ENCODE measurements at regions of chr4 and their contacts with region 1.

Region 1: DNA sequence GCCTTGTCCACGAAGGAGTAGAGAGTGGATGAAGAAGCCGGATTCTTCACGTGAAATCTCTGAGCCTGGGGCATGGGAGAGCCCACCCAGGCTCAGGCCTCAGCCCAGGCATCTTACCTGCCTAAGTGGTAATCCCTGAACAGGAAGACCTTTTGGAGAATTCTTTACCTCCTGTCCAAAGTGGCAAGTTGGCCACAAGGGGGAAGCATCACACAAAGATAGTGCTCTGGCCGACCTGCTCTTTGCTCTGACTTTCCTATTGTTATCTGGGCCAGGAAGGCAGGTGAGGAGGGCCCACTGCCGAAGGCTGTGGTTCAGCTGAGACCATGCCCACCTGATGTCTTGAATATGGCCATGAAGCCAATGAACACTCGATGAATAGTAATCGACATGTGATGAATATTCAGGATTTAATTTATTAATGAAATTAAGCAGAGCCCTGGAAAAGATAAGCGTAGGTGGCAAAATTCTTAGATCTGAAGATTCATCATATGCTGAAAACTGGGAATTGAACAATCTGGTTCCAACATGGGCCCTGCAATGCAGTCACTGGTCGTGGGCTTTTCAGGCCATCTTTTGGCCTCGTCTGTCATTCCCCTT is 93.8 kb downstream of the PDGFRA start:
- DNase-seq: peak; percentile 74
- ATAC-seq: peak; percentile 65
- H3K4me3 Mint-ChIP-seq: no peak overlapping the region
- H3K27ac Mint-ChIP-seq: no peak overlapping the region
- H3K4me1 Mint-ChIP-seq: no peaks in the 10 kb centered on the region
- H3K27me3 Mint-ChIP-seq: peaks cover 3% of the 10 kb centered on the region

Region 2: DNA sequence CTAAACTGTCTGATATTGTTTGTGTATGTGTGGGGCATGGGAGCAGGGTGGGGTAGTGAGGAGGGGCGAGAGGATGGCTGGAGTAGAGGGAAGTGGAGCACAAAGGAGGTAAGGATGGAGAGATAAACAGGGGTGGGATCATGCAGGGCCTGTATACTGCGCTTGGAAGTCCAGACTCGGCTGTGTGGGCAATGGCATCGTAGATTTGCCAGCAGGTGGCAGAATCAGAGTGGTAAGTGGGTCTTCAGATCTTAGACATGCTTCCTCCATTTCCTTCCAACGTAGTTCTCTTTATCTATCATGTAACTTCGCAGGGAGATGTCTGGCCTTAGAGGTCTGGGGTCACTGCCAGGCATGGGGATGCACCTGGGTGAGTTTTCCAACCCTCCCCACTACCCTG is 61.6 kb after region 1 on chr4:
- CTCF ChIA-PET with region 1: no interaction called
- POLR2A ChIA-PET with region 1: no interaction called
- intact Hi-C with region 1: loop called in 1 of 2 experiments (anchors 10 kb)
- DNase-seq: peak; percentile 42
- ATAC-seq: no peak
- H3K4me3 Mint-ChIP-seq: no peak overlapping the region
- H3K27ac Mint-ChIP-seq: no peak overlapping the region
- H3K4me1 Mint-ChIP-seq: no peaks in the 10 kb centered on the region
- H3K27me3 Mint-ChIP-seq: peaks cover 4% of the 10 kb centered on the region

Region 3: DNA sequence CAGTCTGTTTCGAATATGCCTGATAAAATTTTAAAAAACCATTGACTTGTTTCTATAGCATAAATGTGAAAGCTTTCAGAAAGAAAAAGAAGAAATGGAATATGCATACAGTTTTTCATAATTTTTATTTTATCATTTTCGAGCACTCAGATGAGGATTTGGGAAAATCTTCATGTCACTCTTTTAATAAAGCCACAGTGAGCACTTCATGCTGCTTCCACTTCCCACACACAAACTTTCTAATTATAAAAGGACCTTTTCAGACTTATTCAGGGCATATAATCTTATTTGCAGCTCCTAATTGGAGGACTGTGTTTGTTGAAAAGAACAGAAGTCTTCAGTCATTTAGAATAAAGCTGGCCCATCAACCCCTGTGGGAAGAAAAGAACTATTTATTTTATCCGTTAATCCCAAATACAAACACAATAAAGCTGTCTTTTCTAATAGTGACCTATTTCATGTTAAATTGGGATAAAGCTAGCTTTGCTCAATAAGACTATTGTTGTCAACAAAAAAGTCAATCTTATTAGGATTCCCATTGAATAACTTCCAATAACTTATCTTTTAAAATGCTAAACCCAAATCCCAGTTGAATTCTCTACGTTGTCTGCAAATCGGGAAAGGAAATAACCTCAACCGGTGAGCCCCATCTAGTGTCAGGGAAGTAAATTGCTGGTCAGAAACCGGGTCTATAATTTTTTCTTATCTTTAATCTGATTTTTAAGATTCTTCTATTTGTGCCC is 117.6 kb after region 1 on chr4:
- CTCF ChIA-PET with region 1: interaction called, 19 read pairs
- POLR2A ChIA-PET with region 1: no interaction called
- intact Hi-C with region 1: loop called (anchors 1 to 2 kb)
- DNase-seq: no peak
- ATAC-seq: no peak
- H3K4me3 Mint-ChIP-seq: no peak overlapping the region
- H3K27ac Mint-ChIP-seq: no peak overlapping the region
- H3K4me1 Mint-ChIP-seq: no peaks in the 10 kb centered on the region
- H3K27me3 Mint-ChIP-seq: peaks cover 12% of the 10 kb centered on the region

Region 4: GRCh38 chr4:54840992-54841768 is 518.3 kb after region 1 on chr4:
- CTCF ChIA-PET with region 1: no interaction called
- POLR2A ChIA-PET with region 1: no interaction called
- intact Hi-C with region 1: loop called in 1 of 2 experiments (anchors 10 kb)
- DNase-seq: peak; percentile 5
- ATAC-seq: no peak
- H3K4me3 Mint-ChIP-seq: no peak overlapping the region
- H3K27ac Mint-ChIP-seq: no peak overlapping the region
- H3K4me1 Mint-ChIP-seq: peaks cover 2% of the 10 kb centered on the region
- H3K27me3 Mint-ChIP-seq: no peaks in the 10 kb centered on the region

Region 5: DNA sequence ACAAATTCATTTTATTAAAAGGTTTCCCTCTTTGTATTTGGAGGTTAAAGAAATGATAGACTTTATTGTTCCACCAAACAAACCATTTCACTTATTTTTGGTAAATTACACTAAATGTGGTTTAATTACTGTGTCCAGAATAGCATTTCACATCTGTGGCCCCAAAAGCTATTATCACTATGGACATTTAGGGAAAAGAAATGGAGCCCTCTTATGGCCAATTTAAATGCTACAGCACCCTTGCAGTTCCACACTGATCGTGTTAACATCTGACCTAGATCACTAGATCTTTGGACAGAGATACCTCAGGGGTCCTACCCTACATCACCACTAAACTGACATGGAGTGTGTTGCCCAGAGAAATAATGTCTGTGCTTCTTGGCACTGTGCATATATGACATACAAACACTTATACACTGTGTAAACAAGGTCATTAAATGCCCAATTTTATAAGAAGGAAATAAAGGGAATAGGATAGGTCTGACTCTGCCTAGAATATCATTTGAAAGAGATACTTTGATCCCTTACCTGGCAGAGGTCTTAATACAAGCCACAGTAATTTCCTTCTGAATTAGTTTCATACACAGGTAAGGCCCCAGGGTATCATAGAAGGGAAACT is 638.5 kb after region 1 on chr4:
- CTCF ChIA-PET with region 1: interaction called, 5 read pairs
- POLR2A ChIA-PET with region 1: no interaction called
- intact Hi-C with region 1: loop called (anchors 2 to 10 kb)
- DNase-seq: no peak
- ATAC-seq: peak; percentile 44
- H3K4me3 Mint-ChIP-seq: no peak overlapping the region
- H3K27ac Mint-ChIP-seq: no peak overlapping the region
- H3K4me1 Mint-ChIP-seq: peaks cover 14% of the 10 kb centered on the region
- H3K27me3 Mint-ChIP-seq: no peaks in the 10 kb centered on the region

Region 6: GRCh38 chr4:55018521-55018920 is 695.6 kb after region 1 on chr4:
- CTCF ChIA-PET with region 1: no interaction called
- POLR2A ChIA-PET with region 1: no interaction called
- intact Hi-C with region 1: no loop called
- DNase-seq: no peak
- ATAC-seq: no peak
- H3K4me3 Mint-ChIP-seq: no peak overlapping the region
- H3K27ac Mint-ChIP-seq: no peak overlapping the region
- H3K4me1 Mint-ChIP-seq: no peaks in the 10 kb centered on the region
- H3K27me3 Mint-ChIP-seq: peaks cover 10% of the 10 kb centered on the region

Region 7: GRCh38 chr4:55312489-55313101 is 989.7 kb after region 1 on chr4:
- CTCF ChIA-PET with region 1: no interaction called
- POLR2A ChIA-PET with region 1: no interaction called
- intact Hi-C with region 1: loop called in 1 of 2 experiments (anchors 5 kb)
- DNase-seq: peak; percentile 49
- ATAC-seq: peak; percentile 71
- H3K4me3 Mint-ChIP-seq: no peak overlapping the region
- H3K27ac Mint-ChIP-seq: no peak overlapping the region
- H3K4me1 Mint-ChIP-seq: peaks cover 10% of the 10 kb centered on the region
- H3K27me3 Mint-ChIP-seq: no peaks in the 10 kb centered on the region

Region 8: DNA sequence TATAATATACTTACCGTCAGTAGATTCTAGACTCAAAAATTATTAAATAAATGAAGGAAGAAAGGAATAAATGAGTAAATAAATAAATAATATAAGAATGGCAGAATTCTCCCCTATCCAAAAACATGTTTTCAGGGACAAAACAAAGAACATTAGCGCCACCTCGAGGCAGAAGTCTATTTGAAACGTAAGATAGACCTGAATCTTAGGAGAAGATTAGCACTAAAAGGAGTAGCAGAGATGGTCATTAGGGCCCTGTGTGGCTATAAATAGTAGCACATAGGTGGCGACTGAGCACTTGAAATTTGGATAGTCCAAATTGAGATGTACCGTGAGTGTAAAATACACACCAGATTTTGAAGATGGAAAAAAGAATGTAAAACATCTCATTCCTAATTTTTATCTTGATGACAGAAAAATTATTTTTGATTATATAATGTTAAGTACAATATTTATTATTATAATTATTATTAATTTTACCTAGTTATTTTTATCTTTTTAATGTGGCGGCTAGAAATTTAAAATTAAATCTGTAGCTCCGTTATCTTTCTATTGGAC is 998.9 kb after region 1 on chr4:
- CTCF ChIA-PET with region 1: interaction called, 4 read pairs
- POLR2A ChIA-PET with region 1: no interaction called
- intact Hi-C with region 1: loop called in 1 of 2 experiments (anchors 2 kb)
- DNase-seq: peak; percentile 85
- ATAC-seq: no peak
- H3K4me3 Mint-ChIP-seq: no peak overlapping the region
- H3K27ac Mint-ChIP-seq: no peak overlapping the region
- H3K4me1 Mint-ChIP-seq: peaks cover 35% of the 10 kb centered on the region
- H3K27me3 Mint-ChIP-seq: peaks cover 2% of the 10 kb centered on the region

Region 9: DNA sequence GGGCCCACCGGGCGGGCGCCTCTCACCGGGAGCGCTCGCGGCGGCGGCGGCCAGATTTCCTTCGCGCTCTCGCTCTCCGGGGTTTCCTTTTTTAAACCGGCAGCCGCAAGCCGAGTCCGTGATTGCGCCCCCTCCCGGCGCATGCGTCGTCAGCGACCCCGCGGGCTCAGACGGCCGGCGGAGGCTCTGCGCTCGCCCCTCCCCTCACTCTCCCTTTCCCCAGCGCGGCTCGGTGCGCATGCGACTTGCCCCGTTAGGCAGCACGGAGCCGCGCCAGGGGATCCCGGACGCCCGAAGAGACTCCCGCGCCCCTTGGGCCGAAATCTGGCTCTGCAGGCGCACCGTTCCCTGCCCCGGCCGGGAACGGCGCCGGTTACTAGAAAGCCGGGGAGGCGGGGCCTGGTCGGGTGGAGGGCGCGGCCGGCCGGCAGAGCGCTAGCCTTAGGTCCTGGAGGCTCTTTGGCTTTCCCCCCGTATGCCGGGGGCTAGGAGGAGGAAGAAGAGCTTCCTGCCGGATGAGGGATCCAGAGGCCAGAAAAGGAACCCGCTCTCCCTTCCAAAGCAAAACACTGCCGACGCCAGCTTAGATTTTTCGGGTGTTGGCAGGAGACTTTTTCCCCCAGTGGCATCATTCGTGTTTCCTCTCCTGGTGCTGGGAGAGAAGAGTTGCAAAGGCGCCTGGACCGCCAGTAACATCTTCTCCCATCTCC is 1224.0 kb after region 1 on chr4 and contains the start of gene CLOCK:
- CTCF ChIA-PET with region 1: no interaction called
- POLR2A ChIA-PET with region 1: no interaction called
- intact Hi-C with region 1: no loop called
- DNase-seq: peak; percentile 90
- ATAC-seq: peak; percentile 77
- H3K4me3 Mint-ChIP-seq: peak within 1 kb of the TSS; percentile 90
- H3K27ac Mint-ChIP-seq: peak within 1 kb of the TSS; percentile 86
- H3K4me1 Mint-ChIP-seq: peaks cover 46% of the 10 kb centered on the region
- H3K27me3 Mint-ChIP-seq: peaks cover 7% of the 10 kb centered on the region
- total RNA-seq, gene CLOCK: 10.4 to 13.3 TPM